ENCODE measurements at regions of chrX and their contacts with region 1.

Region 1: DNA sequence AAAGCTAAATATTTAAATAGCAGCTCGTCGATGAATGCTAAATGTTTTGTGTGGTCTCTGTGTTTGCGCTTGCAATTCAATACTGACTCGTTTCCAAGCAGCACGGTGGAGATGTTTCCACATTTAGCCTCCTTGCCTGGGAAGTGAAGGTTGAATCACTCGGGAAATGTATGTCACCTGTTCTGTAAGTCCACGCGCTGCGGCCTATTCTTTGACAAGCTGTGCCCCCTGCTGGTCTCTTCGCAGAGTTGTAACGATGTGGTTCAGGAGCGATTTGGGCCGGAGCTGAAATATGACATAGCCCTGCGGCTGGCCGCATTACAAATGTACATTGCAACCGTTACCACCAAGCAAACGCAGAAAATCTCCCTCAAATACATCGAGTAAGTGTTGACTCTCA is 89.6 kb upstream of the PRPS2 start:
- DNase-seq: peak; percentile 84
- H3K4me3 Mint-ChIP-seq: no peak overlapping the region
- H3K27ac Mint-ChIP-seq: no peak overlapping the region
- H3K4me1 Mint-ChIP-seq: no peaks in the 10 kb centered on the region
- H3K27me3 Mint-ChIP-seq: peaks cover 49% of the 10 kb centered on the region
- CTCF ChIP-seq: peak; percentile 72

Region 2: GRCh38 chrX:11533211-11533651 is 1168.4 kb before region 1 on chrX:
- CTCF ChIA-PET with region 1: no interaction called
- POLR2A ChIA-PET with region 1: no interaction called
- intact Hi-C with region 1: loop called (anchors 1 kb)
- DNase-seq: peak; percentile 78
- H3K4me3 Mint-ChIP-seq: no peak overlapping the region
- H3K27ac Mint-ChIP-seq: no peak overlapping the region
- H3K4me1 Mint-ChIP-seq: no peaks in the 10 kb centered on the region
- H3K27me3 Mint-ChIP-seq: peaks cover 20% of the 10 kb centered on the region
- CTCF ChIP-seq: peak; percentile 82

Region 3: DNA sequence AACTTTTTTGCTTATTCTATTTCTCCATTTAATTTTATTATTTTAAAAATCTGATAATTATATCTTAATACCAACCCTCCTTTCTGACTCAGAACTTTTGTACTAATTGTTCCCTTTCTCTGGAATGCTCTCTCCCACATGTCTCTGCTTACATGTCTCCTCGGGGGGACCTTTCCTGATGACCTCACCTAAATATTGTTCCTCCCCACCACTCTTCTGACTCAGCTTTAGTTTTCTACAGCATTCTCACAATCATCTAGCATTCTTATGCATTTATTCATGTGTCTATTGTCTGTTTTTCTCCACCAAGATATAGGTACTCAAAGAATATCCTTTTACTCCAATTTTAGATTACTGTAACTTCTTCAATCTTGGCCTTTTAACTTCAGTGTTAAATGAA is 814.9 kb before region 1 on chrX:
- CTCF ChIA-PET with region 1: no interaction called
- POLR2A ChIA-PET with region 1: no interaction called
- intact Hi-C with region 1: no loop called
- DNase-seq: peak; percentile 51
- H3K4me3 Mint-ChIP-seq: no peak overlapping the region
- H3K27ac Mint-ChIP-seq: peak overlapping the region; percentile 66
- H3K4me1 Mint-ChIP-seq: peaks cover 11% of the 10 kb centered on the region
- H3K27me3 Mint-ChIP-seq: peaks cover 6% of the 10 kb centered on the region
- CTCF ChIP-seq: no peak

Region 4: DNA sequence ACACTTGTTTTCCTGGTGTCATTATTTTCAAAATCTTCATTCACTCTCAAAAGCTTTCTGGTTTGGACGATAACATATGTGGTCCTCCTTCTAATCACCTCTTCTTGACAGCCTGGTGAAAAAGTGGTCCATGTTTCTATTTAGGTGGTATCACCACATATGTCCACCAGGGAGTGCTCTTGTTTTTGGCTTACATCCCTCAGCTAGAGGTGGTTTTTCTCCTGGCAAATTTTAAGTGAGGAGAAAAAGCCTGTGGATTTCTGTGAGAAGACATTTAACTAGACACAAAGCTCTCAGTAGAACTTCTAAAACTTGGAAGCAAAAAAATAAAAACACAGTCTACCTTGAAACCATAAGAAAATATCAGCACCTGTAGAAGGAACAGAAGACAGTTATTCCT is 621.4 kb before region 1 on chrX:
- CTCF ChIA-PET with region 1: interaction called, 20 read pairs
- POLR2A ChIA-PET with region 1: no interaction called
- intact Hi-C with region 1: loop called (anchors 1 kb)
- DNase-seq: peak; percentile 62
- H3K4me3 Mint-ChIP-seq: no peak overlapping the region
- H3K27ac Mint-ChIP-seq: no peak overlapping the region
- H3K4me1 Mint-ChIP-seq: no peaks in the 10 kb centered on the region
- H3K27me3 Mint-ChIP-seq: peaks cover 51% of the 10 kb centered on the region
- CTCF ChIP-seq: peak; percentile 65

Region 5: GRCh38 chrX:12411831-12412230 is 289.8 kb before region 1 on chrX:
- CTCF ChIA-PET with region 1: no interaction called
- POLR2A ChIA-PET with region 1: no interaction called
- intact Hi-C with region 1: no loop called
- DNase-seq: no peak
- H3K4me3 Mint-ChIP-seq: no peak overlapping the region
- H3K27ac Mint-ChIP-seq: no peak overlapping the region
- H3K4me1 Mint-ChIP-seq: no peaks in the 10 kb centered on the region
- H3K27me3 Mint-ChIP-seq: no peaks in the 10 kb centered on the region
- CTCF ChIP-seq: no peak

Region 6: GRCh38 chrX:12497832-12498591 is 203.6 kb before region 1 on chrX:
- CTCF ChIA-PET with region 1: interaction called, 3 read pairs
- POLR2A ChIA-PET with region 1: no interaction called
- intact Hi-C with region 1: loop called (anchors 5 kb)
- DNase-seq: peak; percentile 30
- H3K4me3 Mint-ChIP-seq: no peak overlapping the region
- H3K27ac Mint-ChIP-seq: no peak overlapping the region
- H3K4me1 Mint-ChIP-seq: no peaks in the 10 kb centered on the region
- H3K27me3 Mint-ChIP-seq: no peaks in the 10 kb centered on the region
- CTCF ChIP-seq: no peak

Region 7: DNA sequence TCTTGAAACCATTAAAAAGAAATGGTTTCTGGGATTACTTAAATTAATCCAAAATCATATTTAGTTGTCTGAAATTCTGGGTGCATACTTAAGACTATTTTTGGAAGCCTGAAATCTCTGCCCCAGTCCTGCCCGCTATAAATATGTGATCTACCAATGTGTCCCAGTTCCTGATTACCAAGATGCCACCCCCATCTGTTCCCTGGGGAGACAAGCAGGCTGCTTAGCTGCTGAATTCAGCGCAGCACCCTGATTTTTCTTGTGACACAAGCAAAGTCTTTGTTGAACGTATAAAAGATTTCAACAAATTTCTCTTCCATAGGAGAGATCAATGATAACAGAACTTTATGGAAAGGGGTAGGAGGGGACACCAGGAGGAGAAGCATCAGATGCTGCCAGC is 11.0 kb before region 1 on chrX:
- CTCF ChIA-PET with region 1: interaction called, 13 read pairs
- POLR2A ChIA-PET with region 1: no interaction called
- intact Hi-C with region 1: no loop called
- DNase-seq: no peak
- H3K4me3 Mint-ChIP-seq: no peak overlapping the region
- H3K27ac Mint-ChIP-seq: no peak overlapping the region
- H3K4me1 Mint-ChIP-seq: no peaks in the 10 kb centered on the region
- H3K27me3 Mint-ChIP-seq: peaks cover 37% of the 10 kb centered on the region
- CTCF ChIP-seq: no peak

Region 8: DNA sequence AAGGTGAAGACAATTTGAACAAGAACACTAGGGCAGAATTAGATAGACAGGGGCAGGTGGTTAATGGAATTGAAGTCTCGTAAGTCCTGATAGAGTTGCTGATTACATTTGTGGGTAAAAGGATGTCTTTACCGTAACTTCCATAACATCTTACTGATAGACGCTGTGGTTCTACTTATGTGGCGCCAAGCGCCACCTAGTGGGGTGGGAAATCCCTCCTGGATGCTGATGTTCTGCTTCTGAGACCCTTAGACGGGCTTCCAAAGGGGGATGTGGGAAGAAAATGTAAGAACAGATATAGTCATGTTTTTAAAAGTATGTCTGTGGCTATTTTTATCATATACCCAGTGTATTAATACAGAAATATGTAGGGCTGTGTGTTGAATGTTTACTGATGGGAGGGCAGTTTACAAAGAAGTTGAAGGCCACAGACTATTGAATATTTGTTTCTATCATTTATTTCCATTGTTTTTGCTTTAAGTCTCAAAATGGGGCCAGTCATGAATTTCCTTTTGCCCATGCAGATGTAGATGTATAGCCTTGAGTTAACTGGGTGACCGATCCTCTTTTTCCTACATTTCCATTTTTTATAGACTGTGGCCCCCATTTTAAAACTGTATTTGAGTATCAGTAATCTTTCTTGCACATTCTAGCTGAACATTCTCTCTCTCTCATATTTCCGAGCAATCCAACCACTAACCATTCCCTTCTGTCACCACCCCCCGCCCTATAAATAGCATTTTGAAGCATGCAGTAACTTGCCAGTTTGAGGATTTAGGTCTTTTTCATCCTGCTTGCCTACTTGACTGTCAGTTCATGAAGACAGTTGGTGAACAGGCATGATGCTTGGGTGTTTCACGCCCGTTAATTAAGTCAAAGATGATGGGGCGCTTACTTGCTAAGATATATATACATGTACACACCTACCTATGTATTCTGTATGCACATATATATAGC is 192.7 kb after region 1 on chrX:
- CTCF ChIA-PET with region 1: interaction called, 5 read pairs
- POLR2A ChIA-PET with region 1: no interaction called
- intact Hi-C with region 1: loop called (anchors 5 kb)
- DNase-seq: peak; percentile 53
- H3K4me3 Mint-ChIP-seq: no peak overlapping the region
- H3K27ac Mint-ChIP-seq: no peak overlapping the region
- H3K4me1 Mint-ChIP-seq: no peaks in the 10 kb centered on the region
- H3K27me3 Mint-ChIP-seq: peaks cover 48% of the 10 kb centered on the region
- CTCF ChIP-seq: peak; percentile 85